Head of caudate nucleus (tissue), 42 donors: ENCODE measurements at regions of chr15 and their contacts with region 1.

Region 1: GRCh38 chr15:84981054-84981710 is 474 bp upstream of the PDE8A start:
- DNase-seq: peak; percentile 80 to 97 (median 94)

Region 2: GRCh38 chr15:85125056-85125661 is 144.0 kb after region 1 on chr15:
- intact Hi-C with region 1: loop called (anchors 10 kb)
- DNase-seq: peak in 2 of 42 donors; percentile 21 to 37